ENCODE measurements at regions of chr16 and their contacts with region 1.

Region 1: DNA sequence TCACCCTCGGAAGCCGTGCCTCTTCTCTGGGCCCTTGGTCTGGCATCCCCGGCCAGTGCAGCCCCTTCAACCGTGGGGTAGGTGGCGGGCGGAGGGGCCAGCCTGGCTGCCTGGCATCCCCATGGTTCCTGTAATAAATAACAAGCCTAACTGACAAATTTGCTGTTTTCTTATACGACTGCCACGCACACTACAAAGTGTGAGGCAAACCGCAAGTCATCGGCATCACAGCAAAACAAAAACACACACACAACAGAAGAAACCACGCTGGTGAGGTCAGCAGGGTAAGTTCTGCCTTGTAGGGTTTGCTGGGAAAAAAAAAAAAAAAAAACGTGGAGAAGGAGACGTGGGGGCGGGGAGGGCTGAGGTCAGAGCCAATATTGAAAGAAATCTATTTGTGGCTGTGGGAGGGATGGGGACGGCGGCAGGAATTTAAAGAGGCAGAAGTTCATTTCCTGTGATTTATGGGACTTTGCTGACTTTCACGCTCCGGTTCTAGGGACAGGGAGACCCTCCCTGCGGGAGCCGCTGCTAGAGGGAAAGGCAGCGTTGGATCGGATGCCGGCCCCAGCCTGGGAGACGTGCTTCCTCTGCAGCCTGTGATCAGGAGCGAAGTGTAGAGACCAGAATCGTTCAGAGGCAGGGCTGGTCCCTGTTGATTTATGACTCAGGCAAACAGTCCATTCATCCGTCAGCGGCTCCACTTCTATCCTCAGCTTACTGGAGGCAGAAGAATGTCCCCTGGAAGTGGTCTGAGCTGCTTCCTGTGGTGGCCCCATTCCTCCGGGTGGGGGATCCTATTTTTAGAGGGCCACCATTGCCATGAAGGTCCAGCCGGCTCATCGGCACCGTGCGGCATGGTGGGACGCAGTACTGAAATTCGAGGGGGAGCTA is 162.8 kb downstream of the FOXL1 start:
- DNase-seq: peak; percentile 92
- H3K4me3 ChIP-seq: peak overlapping the region in 2 of 3 experiments; percentile 15 to 31
- H3K27ac ChIP-seq: peak overlapping the region; percentile 96
- H3K4me1 ChIP-seq: peaks cover 19% of the 10 kb centered on the region
- H3K27me3 ChIP-seq: no peaks in the 10 kb centered on the region
- CTCF ChIP-seq: no peak
- POLR2A ChIP-seq: peak; percentile 75

Region 2: GRCh38 chr16:86570558-86571529 is 170.3 kb before region 1 on chr16:
- CTCF ChIA-PET with region 1: interaction called, 3 read pairs
- POLR2A ChIA-PET with region 1: no interaction called
- dilution Hi-C with region 1: no loop called
- intact Hi-C with region 1: loop called (anchors 1 kb)
- DNase-seq: peak; percentile 57
- H3K4me3 ChIP-seq: peak overlapping the region; percentile 88 to 99 (median 94)
- H3K27ac ChIP-seq: peak overlapping the region; percentile 78
- H3K4me1 ChIP-seq: peaks cover 35% of the 10 kb centered on the region
- H3K27me3 ChIP-seq: no peaks in the 10 kb centered on the region
- CTCF ChIP-seq: no peak
- POLR2A ChIP-seq: no peak

Region 3: DNA sequence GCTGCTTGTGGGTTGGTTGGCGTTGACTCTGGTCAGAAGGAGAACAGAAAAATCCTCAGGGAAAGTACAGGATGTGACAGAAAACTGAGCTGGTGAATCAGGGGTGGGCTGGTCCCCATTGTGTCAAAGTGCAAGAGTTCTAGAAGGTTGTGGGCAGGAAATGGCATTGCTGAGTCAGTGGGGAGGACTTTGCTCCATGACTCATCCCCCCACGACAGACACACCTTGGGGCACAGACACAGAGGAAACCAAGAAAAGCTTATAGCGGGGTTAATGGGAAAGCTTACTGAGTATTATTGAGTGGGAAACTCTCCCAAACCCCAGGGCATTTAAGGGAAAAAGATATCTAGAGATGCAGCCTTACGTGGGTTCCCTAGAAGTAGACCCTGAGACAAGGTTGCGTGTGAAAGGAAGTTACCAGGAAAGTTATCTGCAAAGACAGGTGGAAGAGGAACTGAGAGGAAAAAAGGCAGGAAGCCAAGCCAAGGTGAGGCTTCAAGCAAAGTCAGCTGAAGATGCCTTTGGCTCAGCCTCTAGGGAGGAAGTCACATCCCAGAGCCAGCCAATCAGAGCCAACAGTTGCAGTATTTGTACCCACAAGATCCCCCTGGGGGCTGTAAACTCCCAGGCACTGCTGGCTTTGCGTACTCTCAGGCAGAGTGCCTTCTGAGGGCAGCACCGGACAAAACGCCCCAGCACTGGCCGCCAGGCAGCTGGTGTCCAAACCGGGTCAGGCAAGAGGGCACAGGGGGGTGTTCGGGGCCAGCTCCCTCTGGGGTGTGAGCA is 76.4 kb before region 1 on chr16:
- CTCF ChIA-PET with region 1: interaction called, 3 read pairs
- POLR2A ChIA-PET with region 1: interaction called, 3 read pairs
- dilution Hi-C with region 1: no loop called
- intact Hi-C with region 1: loop called (anchors 1 kb)
- DNase-seq: peak; percentile 94
- H3K4me3 ChIP-seq: no peak overlapping the region
- H3K27ac ChIP-seq: peak overlapping the region; percentile 95
- H3K4me1 ChIP-seq: peaks cover 60% of the 10 kb centered on the region
- H3K27me3 ChIP-seq: no peaks in the 10 kb centered on the region
- CTCF ChIP-seq: no peak
- POLR2A ChIP-seq: no peak

Region 4: GRCh38 chr16:86722970-86723369 is 18.2 kb before region 1 on chr16:
- CTCF ChIA-PET with region 1: no interaction called
- POLR2A ChIA-PET with region 1: no interaction called
- dilution Hi-C with region 1: no loop called
- intact Hi-C with region 1: no loop called
- DNase-seq: no peak
- H3K4me3 ChIP-seq: no peak overlapping the region
- H3K27ac ChIP-seq: no peak overlapping the region
- H3K4me1 ChIP-seq: no peaks in the 10 kb centered on the region
- H3K27me3 ChIP-seq: peaks cover 0 to 15% of the 10 kb centered on the region in 2 experiments
- CTCF ChIP-seq: no peak
- POLR2A ChIP-seq: no peak

Region 5: GRCh38 chr16:86797700-86798099 is 56.5 kb after region 1 on chr16:
- CTCF ChIA-PET with region 1: no interaction called
- POLR2A ChIA-PET with region 1: no interaction called
- dilution Hi-C with region 1: no loop called
- intact Hi-C with region 1: loop called (anchors 2 kb)
- DNase-seq: no peak
- H3K4me3 ChIP-seq: no peak overlapping the region
- H3K27ac ChIP-seq: no peak overlapping the region
- H3K4me1 ChIP-seq: peaks cover 12% of the 10 kb centered on the region
- H3K27me3 ChIP-seq: peaks cover 4 to 10% of the 10 kb centered on the region in 2 experiments
- CTCF ChIP-seq: no peak
- POLR2A ChIP-seq: no peak

Region 6: DNA sequence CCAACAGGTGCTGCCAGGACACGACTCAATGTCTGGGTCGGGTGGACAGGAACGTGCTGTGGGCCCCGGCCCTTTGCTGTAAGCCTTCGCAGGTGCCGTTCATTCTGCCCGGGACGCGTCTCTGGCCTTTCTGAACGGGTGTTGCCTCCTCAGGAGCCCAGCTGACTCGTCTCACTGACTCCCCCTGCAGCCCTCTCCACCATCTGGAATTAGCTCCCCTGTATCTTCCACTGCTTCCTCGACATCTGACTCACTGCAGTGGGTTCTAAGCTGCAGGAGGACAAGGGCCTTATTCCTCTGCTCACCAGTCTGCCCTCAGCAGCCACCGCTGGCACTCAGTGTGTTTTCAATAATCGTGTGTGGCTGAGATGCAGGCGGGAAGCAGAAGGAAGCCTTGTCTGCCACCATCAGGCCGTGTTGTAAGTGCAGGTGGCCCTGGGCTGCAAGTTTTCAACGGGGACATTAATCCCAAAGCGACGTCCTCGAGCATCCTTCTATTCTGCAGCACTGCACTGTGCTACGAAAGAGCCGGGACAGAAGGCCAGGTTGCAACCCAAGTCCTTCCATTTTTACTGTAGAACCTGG is 93.4 kb after region 1 on chr16:
- CTCF ChIA-PET with region 1: no interaction called
- POLR2A ChIA-PET with region 1: no interaction called
- dilution Hi-C with region 1: no loop called
- intact Hi-C with region 1: loop called (anchors 1 kb)
- DNase-seq: peak; percentile 41
- H3K4me3 ChIP-seq: no peak overlapping the region
- H3K27ac ChIP-seq: no peak overlapping the region
- H3K4me1 ChIP-seq: peaks cover 7% of the 10 kb centered on the region
- H3K27me3 ChIP-seq: no peaks in the 10 kb centered on the region
- CTCF ChIP-seq: peak in 1 of 2 donors; percentile 29
- POLR2A ChIP-seq: no peak